Left cardiac atrium (tissue), 4 donors: ENCODE measurements at regions of chr3 and their contacts with region 1.

Region 1: DNA sequence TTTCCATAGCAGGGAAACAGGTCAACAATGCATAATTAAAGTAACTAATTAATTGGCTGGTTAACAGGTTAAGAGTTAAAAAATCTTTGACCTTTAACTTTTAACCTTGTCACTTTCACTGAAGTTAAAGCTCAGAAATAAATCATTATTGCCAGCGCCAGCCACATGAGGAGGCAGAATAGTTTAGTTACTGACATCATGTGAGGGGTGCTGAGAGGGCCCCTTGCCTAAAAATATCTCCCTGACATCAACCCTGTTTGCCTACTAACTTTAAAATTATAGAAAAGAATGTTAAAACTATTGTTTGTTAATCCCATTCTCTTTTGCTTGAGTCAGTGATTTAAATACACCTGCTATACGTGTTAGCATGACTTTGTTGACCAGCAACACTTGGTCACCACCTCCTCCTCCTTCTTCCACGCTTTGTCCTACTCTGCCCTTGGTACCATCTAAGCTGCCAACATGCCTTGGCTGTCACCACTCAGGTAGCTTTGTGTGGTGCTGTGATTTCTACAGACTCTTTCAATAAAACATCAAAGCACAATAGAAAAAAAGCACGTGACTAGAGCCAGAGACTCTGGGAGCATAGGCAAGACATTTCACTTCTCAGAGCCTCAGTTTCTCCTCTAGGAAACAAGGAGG is 2.7 kb downstream of the FBXO40 start:
- DNase-seq: no peak
- ATAC-seq: peak; percentile 42 to 47

Region 2: DNA sequence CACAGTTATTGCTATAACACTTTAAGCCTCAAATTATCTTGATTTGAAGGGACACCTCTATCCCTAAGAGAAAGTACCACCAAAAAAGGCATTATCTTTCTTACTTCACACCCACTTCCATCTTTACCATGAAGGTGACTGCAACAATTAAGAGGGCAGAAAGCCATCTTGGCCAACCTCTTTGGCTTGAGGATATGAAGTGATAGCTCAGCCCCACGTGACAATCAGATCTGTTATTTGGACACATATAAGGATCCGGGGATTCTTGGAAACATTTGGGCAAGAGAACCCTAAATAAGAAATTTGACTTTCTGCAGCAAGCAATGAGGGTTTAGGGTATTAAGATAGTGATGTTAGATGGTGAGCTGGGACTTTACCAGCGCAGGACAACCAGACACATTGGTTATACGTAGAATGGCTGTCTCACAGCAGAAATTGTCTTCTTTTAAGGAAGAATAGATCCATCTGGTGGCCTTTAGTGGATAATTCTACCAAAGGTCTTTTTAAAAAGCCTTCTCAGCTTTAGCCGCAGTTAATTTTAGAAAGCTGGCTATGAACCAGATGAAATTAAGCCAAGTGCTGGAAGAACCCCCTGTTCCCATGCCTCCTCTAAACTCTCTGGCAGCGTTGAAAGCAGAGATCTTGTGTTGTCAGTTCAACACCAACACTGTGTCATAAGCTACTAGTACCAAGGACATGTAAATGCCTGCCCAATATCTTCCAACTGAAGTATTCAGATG is 52.5 kb after region 1 on chr3:
- intact Hi-C with region 1: loop called in 1 of 2 experiments (anchors 5 kb)
- DNase-seq: no peak
- ATAC-seq: peak; percentile 97 to 99

Region 3: DNA sequence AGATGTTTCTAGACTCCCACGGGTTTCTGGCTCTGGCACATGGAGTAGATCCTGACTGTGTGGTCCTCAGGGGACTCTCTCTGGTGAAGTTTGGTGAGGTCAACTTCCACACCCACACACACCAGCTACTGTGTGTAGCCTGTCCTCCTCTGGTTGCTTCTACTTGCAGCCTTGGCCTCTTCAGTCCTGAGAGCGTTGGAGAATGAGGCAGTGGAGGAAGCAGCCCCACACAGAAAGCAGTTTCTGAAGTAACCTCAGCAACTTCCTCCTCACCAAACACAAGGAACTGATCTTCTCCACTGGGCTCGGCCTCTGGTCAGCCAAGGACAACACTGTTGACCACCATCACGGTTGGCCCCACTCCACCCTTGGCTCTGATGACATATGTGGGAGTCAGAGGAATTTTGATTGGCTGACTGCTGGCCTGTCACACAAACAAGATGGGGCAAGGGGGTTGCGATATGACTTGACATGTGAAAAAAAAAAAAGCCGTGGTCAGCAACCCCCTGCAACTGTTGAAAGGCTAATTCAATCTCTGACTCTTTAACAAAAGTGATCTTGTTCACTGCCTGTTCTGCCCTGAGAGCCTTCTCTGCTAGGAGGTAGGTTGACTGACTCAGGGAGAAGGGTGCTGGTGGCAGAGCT is 478.9 kb after region 1 on chr3:
- intact Hi-C with region 1: no loop called
- DNase-seq: peak; percentile 61
- ATAC-seq: peak; percentile 78 to 93